ENCODE measurements at regions of chr11 and their contacts with region 1.

Region 1: DNA sequence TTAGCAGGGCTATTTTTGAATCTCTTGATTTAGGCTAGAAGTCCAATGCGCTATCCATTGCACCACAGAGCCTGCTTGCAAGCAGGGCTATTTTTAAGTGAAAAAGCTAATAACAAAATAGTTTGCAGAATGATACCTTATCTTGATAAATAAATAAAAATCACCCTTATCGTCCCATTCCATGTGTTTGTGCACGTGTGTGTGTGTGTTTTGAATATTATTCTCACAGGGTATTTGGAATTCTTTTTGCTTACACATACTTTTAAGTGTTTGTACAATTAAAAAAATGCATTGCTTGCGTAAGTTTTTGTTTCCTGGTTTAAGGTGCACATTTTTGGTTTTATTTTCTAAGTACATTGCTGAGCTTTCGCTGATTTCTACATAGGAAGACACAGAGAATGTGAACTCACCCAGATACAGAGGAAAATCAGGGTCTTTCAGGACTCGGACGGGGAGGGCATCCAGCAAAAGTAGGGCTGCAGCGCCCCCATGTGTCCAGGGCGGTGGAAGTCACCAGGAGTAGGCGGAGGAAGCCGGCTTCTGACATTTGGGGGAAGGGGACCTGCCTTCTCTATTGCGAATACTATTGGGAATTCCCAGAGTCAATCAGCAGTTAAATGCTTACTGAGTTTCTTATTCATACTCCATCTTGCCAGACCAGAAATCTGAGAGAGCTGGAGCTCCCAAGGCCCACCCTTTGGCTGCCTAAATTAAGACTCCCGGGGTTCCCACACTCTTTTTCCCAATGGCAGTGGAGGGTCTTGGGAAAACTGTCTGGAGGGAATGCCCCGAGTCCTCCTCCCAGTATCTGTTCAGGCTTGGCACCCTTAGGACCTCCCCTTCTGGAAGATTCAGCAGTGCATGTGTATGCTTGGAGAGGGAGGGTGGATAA is 27.2 kb downstream of the SLC1A2 start:
- DNase-seq: peak; percentile 75 to 78
- ATAC-seq: peak; percentile 94 to 95
- H3K4me3 ChIP-seq: no peak overlapping the region
- H3K27ac ChIP-seq: peak overlapping the region; percentile 67 to 75
- H3K4me1 ChIP-seq: peaks cover 37% of the 10 kb centered on the region
- CTCF ChIP-seq: peak; percentile 95
- EP300 ChIP-seq: no peak
- POLR2A ChIP-seq: no peak
- RAD21 ChIP-seq: peak; percentile 99

Region 2: DNA sequence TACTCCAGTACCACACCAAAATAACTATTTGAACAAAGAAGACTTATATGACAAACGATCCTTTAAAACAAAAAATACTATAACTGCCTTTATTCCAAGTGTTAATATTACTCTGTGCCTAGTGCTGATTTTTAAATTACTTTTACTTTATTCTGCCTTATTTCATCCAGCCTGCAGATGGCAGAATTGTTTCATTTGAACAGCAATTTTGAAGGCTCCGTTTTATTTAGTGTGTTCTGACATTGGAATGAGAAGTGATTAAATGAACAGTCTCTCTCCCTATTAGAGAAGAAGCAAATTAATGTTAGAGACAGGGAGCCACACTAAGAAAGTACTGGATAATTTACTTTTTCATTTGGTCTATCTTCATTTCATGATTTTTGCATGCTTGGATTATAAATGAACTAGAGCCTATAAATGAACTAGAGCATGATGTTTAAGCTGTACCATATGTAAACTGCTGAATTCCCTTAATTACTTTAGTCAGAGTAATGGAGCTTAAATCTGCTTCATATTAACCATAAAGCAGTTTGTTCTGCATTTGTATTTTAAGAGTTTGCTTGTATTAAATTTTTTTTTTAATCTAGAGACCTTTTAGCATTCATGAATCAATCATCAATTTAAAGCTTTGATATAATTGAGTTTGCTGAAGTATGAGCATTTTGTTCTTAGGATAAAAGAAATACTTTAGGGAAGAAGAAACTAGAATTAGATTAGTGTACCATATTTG is 465.9 kb before region 1 on chr11:
- CTCF ChIA-PET with region 1: interaction called, 117 read pairs
- POLR2A ChIA-PET with region 1: interaction called, 6 read pairs
- DNase-seq: peak in 1 of 2 experiments; percentile 53
- ATAC-seq: peak; percentile 54 to 66; a peak in 3 of 6 replicates
- H3K4me3 ChIP-seq: no peak overlapping the region
- H3K27ac ChIP-seq: peak overlapping the region in 1 of 2 experiments; percentile 3; a peak in 1 of 6 replicates
- H3K4me1 ChIP-seq: peaks cover 52% of the 10 kb centered on the region
- CTCF ChIP-seq: peak; percentile 92
- EP300 ChIP-seq: no peak
- POLR2A ChIP-seq: no peak
- RAD21 ChIP-seq: peak; percentile 93 to 94

Region 3: GRCh38 chr11:35138943-35139721 is 253.0 kb before region 1 on chr11 and contains the start of gene CD44:
- CTCF ChIA-PET with region 1: interaction called, 13 read pairs
- POLR2A ChIA-PET with region 1: no interaction called
- DNase-seq: peak; percentile 80 to 83
- ATAC-seq: peak; percentile 68 to 77
- H3K4me3 ChIP-seq: peak within 1 kb of the TSS; percentile 79
- H3K27ac ChIP-seq: peak within 1 kb of the TSS; percentile 96 to 98
- H3K4me1 ChIP-seq: peaks cover 60% of the 10 kb centered on the region
- CTCF ChIP-seq: no peak
- EP300 ChIP-seq: no peak
- POLR2A ChIP-seq: peak; percentile 92
- RAD21 ChIP-seq: peak in 1 of 2 experiments; percentile 9; a peak in 1 of 5 replicates
- polyA plus RNA-seq, gene CD44: 309 and 350 TPM in 2 replicates

Region 4: GRCh38 chr11:35363854-35364780 is 28.1 kb before region 1 on chr11:
- CTCF ChIA-PET with region 1: interaction called, 16 read pairs
- POLR2A ChIA-PET with region 1: no interaction called
- DNase-seq: peak; percentile 46 to 74
- ATAC-seq: peak; percentile 87 to 93
- H3K4me3 ChIP-seq: no peak overlapping the region
- H3K27ac ChIP-seq: peak overlapping the region; percentile 76 to 85
- H3K4me1 ChIP-seq: peaks cover 43% of the 10 kb centered on the region
- CTCF ChIP-seq: no peak
- EP300 ChIP-seq: peak; percentile 44 to 65; a peak in 2 of 5 replicates
- POLR2A ChIP-seq: no peak
- RAD21 ChIP-seq: peak in 1 of 2 experiments; percentile 48; a peak in 3 of 5 replicates

Region 5: GRCh38 chr11:35404388-35404775 is 12.2 kb after region 1 on chr11:
- CTCF ChIA-PET with region 1: interaction called, 38 read pairs
- POLR2A ChIA-PET with region 1: no interaction called
- DNase-seq: peak; percentile 48 to 54
- ATAC-seq: peak; percentile 69 to 89
- H3K4me3 ChIP-seq: 0 out of 3 replicates have a peak overlapping the region, but pooled peaks have one; percentile 18
- H3K27ac ChIP-seq: peak overlapping the region in 1 of 2 experiments; percentile 62; a peak in 3 of 6 replicates
- H3K4me1 ChIP-seq: 0 out of 3 replicates have a peak, but pooled peaks cover 7% of the 10 kb centered on the region
- CTCF ChIP-seq: peak; percentile 72
- EP300 ChIP-seq: no peak
- POLR2A ChIP-seq: no peak
- RAD21 ChIP-seq: peak; percentile 75 to 78

Measured in A549 (cell line).